Activated CD8-positive, alpha-beta T cell treated with anti-CD3 and anti-CD28 coated beads, Interleukin-2, amount 10 ng/mL, durations not matched to agents 7 days and 5 days (primary cell): ENCODE measurements at regions of chr16 and their contacts with region 1.

Region 1: DNA sequence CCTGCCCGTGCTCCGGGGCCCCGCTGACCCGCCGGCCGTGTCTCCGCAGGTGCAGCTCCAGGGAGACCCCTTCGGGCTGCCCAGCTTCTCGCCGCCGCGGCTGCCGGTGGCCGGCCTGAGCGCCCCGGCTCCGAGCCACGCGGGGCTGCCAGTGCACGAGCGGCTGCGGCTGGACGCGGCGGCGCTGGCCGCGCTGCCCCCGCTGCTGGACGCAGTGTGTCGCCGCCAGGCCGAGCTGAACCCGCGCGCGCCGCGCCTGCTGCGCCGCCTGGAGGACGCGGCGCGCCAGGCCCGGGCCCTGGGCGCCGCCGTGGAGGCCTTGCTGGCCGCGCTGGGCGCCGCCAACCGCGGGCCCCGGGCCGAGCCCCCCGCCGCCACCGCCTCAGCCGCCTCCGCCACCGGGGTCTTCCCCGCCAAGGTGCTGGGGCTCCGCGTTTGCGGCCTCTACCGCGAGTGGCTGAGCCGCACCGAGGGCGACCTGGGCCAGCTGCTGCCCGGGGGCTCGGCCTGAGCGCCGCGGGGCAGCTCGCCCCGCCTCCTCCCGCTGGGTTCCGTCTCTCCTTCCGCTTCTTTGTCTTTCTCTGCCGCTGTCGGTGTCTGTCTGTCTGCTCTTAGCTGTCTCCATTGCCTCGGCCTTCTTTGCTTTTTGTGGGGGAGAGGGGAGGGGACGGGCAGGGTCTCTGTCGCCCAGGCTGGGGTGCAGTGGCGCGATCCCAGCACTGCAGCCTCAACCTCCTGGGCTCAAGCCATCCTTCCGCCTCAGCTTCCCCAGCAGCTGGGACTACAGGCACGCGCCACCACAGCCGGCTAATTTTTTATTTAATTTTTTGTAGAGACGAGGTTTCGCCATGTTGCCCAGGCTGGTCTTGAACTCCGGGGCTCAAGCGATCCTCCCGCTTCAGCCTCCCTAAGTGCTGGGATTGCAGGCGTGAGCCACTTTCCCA is 5.9 kb downstream of the CTF1 start:
- DNase-seq: peak; percentile 70
- ATAC-seq: peak; percentile 85
- H3K4me3 Mint-ChIP-seq: peak overlapping the region; percentile 90
- H3K27ac Mint-ChIP-seq: peak overlapping the region; percentile 99
- H3K4me1 Mint-ChIP-seq: peaks cover 48% of the 10 kb centered on the region
- H3K27me3 Mint-ChIP-seq: no peaks in the 10 kb centered on the region

Region 2: DNA sequence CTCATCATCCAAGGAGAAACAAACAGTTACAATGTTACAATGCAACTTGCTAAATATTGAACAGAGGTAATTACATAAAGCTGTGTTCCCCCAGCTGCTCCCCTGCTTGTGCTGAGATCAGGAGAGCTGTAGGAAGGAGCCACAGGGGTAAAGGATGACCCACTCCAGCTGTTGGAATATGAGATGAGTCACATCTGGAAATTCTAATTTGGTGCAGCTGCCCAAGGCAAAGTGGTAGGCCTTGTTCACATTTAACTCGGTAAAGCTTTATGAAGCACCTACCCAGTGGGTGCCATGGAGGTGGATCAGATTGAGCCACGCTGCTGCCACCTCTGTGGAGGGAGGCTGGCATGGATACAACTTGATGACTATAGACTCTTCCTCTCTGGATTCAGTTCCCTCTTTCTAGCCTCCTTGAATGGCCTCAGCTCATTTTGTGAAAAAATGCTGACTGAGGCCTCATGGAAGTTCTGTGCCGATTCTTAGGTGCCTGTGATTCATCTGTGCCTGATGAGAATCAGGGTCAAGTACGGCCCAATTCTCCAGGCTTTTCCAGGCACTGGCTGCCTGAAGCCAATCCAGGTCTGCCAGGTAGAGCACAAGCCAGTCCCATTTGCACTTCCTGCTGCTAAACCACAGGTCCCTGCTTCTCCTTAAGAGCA is 299.6 kb before region 1 on chr16:
- CTCF ChIA-PET with region 1: no interaction called
- POLR2A ChIA-PET with region 1: no interaction called
- DNase-seq: no peak
- ATAC-seq: no peak
- H3K4me3 Mint-ChIP-seq: no peak overlapping the region
- H3K27ac Mint-ChIP-seq: no peak overlapping the region
- H3K4me1 Mint-ChIP-seq: peaks cover 17% of the 10 kb centered on the region
- H3K27me3 Mint-ChIP-seq: no peaks in the 10 kb centered on the region

Region 3: GRCh38 chr16:30813821-30814189 is 88.5 kb before region 1 on chr16:
- CTCF ChIA-PET with region 1: interaction called, 11 read pairs
- POLR2A ChIA-PET with region 1: interaction called, 4 read pairs
- DNase-seq: no peak
- ATAC-seq: peak; percentile 2
- H3K4me3 Mint-ChIP-seq: peak overlapping the region; percentile 83
- H3K27ac Mint-ChIP-seq: peak overlapping the region; percentile 89
- H3K4me1 Mint-ChIP-seq: peaks cover 15% of the 10 kb centered on the region
- H3K27me3 Mint-ChIP-seq: peaks cover 4% of the 10 kb centered on the region

Region 4: DNA sequence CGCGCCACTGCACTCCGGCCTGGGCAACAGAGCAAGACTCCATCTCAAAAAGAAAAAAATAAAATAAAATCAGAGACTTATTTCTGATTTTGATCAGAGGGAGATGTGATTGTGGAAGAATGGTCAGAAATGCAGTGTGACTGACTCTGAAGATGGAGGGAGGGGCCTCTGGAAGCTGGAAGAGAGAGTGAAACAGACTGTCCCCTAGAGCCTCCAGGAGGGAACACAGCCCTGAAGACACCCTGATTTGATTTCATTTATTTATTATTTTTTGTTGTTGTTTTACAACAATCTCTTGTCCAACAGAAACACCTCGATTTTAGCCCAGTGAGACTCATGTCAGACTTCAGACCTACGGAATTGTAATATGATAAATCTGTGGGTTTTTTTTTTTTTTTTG is 34.6 kb before region 1 on chr16:
- CTCF ChIA-PET with region 1: interaction called, 14 read pairs
- POLR2A ChIA-PET with region 1: interaction called, 73 read pairs
- DNase-seq: no peak
- ATAC-seq: peak; percentile 51
- H3K4me3 Mint-ChIP-seq: no peak overlapping the region
- H3K27ac Mint-ChIP-seq: no peak overlapping the region
- H3K4me1 Mint-ChIP-seq: peaks cover 3% of the 10 kb centered on the region
- H3K27me3 Mint-ChIP-seq: no peaks in the 10 kb centered on the region

Region 5: GRCh38 chr16:30874821-30875717 is 27.2 kb before region 1 on chr16:
- CTCF ChIA-PET with region 1: interaction called, 42 read pairs
- POLR2A ChIA-PET with region 1: interaction called, 73 read pairs
- DNase-seq: peak; percentile 90
- ATAC-seq: peak; percentile 91
- H3K4me3 Mint-ChIP-seq: peak overlapping the region; percentile 94
- H3K27ac Mint-ChIP-seq: peak overlapping the region; percentile 86
- H3K4me1 Mint-ChIP-seq: peaks cover 33% of the 10 kb centered on the region
- H3K27me3 Mint-ChIP-seq: no peaks in the 10 kb centered on the region

Region 6: GRCh38 chr16:30882429-30883310 is 19.6 kb before region 1 on chr16:
- CTCF ChIA-PET with region 1: interaction called, 42 read pairs
- POLR2A ChIA-PET with region 1: interaction called, 73 read pairs
- DNase-seq: peak; percentile 30
- ATAC-seq: peak; percentile 54
- H3K4me3 Mint-ChIP-seq: peak overlapping the region; percentile 5
- H3K27ac Mint-ChIP-seq: peak overlapping the region; percentile 87
- H3K4me1 Mint-ChIP-seq: peaks cover 34% of the 10 kb centered on the region
- H3K27me3 Mint-ChIP-seq: no peaks in the 10 kb centered on the region

Region 7: GRCh38 chr16:30922960-30923535 is 20.7 kb after region 1 on chr16:
- CTCF ChIA-PET with region 1: interaction called, 11 read pairs
- POLR2A ChIA-PET with region 1: interaction called, 3 read pairs
- DNase-seq: peak; percentile 98
- ATAC-seq: peak; percentile 82
- H3K4me3 Mint-ChIP-seq: peak overlapping the region; percentile 97
- H3K27ac Mint-ChIP-seq: peak overlapping the region; percentile 99
- H3K4me1 Mint-ChIP-seq: peaks cover 28% of the 10 kb centered on the region
- H3K27me3 Mint-ChIP-seq: no peaks in the 10 kb centered on the region

Region 8: DNA sequence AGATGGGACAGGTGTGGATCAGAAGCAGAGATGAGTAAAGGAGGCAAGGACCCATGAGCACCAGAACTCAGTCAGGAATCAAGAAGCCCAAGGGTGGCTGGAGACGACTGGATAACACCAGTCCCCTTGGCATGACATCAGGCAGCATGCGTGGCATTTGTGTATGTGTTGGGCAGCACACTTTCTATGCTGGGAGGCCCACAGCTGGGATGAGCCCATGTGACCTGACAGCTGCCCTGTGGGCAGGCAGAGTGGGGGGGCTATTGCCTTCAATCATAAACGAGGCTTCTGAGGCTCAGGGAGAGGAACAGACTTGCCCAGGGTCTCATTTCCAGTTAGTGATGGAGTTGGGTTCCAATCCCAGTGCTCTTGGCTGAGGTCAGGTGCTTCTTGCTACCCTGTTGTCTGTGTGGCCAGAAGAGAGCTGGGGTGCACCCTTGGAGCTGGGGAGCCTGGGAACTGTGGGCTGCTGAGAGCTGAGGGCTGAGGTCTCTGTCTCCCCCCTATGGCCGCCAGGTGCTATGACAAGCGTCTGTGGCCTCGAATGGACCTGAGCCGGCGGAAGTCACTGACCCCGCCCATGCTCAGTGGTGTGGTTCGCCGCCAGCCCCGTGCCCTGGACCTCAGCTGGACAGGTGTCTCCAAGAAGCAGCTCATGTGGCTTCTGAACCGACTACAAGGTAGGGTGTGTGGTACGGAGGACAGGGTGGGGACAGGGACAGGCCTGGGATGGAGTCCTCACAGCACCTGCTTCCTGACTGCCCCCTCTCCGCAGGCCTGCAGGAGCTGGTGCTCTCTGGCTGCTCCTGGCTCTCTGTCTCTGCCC is 39.5 kb after region 1 on chr16:
- CTCF ChIA-PET with region 1: interaction called, 22 read pairs
- POLR2A ChIA-PET with region 1: no interaction called
- DNase-seq: peak; percentile 85
- ATAC-seq: peak; percentile 97
- H3K4me3 Mint-ChIP-seq: peak overlapping the region; percentile 66
- H3K27ac Mint-ChIP-seq: peak overlapping the region; percentile 77
- H3K4me1 Mint-ChIP-seq: peaks cover 40% of the 10 kb centered on the region
- H3K27me3 Mint-ChIP-seq: no peaks in the 10 kb centered on the region

Region 9: DNA sequence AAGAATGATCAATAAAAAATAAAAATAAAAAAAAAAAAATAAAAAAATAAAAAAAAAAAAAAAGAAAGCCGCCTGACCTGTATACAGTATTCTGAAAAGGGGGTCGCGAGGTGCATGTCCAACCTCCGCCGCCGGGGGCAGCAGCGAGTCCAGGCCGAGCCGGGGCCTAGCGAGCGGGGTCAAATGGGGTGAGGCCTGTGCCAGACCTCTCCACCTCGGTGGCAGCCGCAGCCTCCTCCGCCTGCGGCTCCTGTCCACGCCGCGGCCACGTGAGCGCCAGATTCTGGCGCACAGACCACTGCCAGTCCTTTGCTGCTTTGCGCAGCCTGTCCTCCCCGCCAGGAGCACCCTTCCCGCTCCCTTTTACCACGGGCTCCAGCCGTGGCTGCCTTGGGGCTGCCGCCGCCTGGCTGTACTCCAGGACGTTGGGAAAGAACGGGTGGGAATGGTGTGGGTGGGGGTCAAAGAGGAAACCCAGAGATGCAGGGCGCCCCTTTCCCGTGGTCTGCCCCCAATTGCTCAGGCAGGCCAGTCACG is 203.4 kb after region 1 on chr16:
- CTCF ChIA-PET with region 1: no interaction called
- POLR2A ChIA-PET with region 1: no interaction called
- DNase-seq: peak; percentile 86
- ATAC-seq: peak; percentile 61
- H3K4me3 Mint-ChIP-seq: peak overlapping the region; percentile 28
- H3K27ac Mint-ChIP-seq: peak overlapping the region; percentile 74
- H3K4me1 Mint-ChIP-seq: peaks cover 28% of the 10 kb centered on the region
- H3K27me3 Mint-ChIP-seq: no peaks in the 10 kb centered on the region